ENCODE measurements at regions of chr11 and their contacts with region 1.

Region 1: GRCh38 chr11:6619004-6619745 is at the start of gene TPP1:
- DNase-seq: peak; percentile 76 to 94 (median 90)
- ATAC-seq: peak; percentile 96
- H3K4me3 ChIP-seq: peak within 1 kb of the TSS; percentile 91
- H3K4me3 Mint-ChIP-seq: no peak within 1 kb of the TSS
- H3K27ac ChIP-seq: peak within 1 kb of the TSS; percentile 87
- H3K27ac Mint-ChIP-seq: no peak within 1 kb of the TSS
- H3K4me1 ChIP-seq: peaks cover 6 to 22% of the 10 kb centered on the region in 2 donors
- H3K4me1 Mint-ChIP-seq: peaks cover 7 to 17% (median 9%) of the 10 kb centered on the region in 7 donors
- H3K27me3 ChIP-seq: no peaks in the 10 kb centered on the region
- H3K27me3 Mint-ChIP-seq: no peaks in the 10 kb centered on the region
- total RNA-seq, gene TPP1: 49.9 to 160 (median 134) TPM

Region 2: DNA sequence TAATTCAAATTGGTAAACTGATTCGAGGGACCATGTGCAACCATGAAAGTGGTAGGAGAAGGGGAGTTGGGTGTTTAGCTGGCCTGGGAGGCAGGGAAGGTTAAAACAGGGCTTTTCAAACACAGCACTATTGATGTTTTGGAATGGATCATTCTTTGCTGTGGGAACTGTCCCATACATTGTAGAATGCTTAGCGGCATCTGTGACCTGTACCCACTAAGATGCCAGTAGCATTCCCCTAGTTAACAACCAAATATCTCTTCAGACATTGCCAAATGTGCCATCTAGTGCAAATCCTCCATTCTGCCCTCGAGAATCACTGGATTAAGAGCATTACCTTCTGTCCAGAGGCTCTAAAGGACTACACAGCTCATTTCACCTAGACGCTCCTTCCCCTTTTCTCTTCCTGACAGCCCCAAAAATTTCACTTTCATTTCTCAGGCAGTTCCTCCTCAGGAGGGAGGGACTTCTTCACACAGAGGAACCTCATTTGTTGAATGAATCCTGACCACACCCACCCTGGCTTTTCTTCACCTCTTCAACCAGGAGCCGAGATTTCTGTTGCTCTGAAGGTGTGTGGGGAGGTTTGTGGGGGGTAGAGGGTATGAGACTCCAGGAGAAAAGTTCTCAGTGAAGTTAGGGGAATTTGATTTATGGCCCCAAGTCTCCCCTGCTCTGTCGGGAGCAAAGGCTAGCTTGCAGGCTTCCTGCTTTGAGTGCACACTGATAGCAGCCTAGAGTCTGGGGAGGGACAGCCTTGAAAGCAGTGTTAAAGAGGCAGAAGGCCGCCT is 994.5 kb before region 1 on chr11 and contains the start of gene TRIM34:
- CTCF ChIA-PET with region 1: no interaction called
- POLR2A ChIA-PET with region 1: no interaction called
- intact Hi-C with region 1: loop called in 1 of 2 experiments (anchors 5 kb)
- DNase-seq: peak; percentile 15 to 79 (median 74)
- ATAC-seq: peak; percentile 98
- H3K4me3 ChIP-seq: peak within 1 kb of the TSS; percentile 73
- H3K4me3 Mint-ChIP-seq: peak within 1 kb of the TSS; percentile 81 to 96 (median 91)
- H3K27ac ChIP-seq: peak within 1 kb of the TSS; percentile 84
- H3K27ac Mint-ChIP-seq: peak within 1 kb of the TSS; percentile 90 to 96 (median 95)
- H3K4me1 ChIP-seq: peaks cover 17 to 18% of the 10 kb centered on the region in 2 donors
- H3K4me1 Mint-ChIP-seq: peaks cover 33 to 55% (median 51%) of the 10 kb centered on the region in 7 donors
- H3K27me3 ChIP-seq: no peaks in the 10 kb centered on the region
- H3K27me3 Mint-ChIP-seq: no peaks in the 10 kb centered on the region
- total RNA-seq, gene TRIM34: 5.8 to 14.2 (median 10.8) TPM

Region 3: GRCh38 chr11:6531267-6531752 is 87.9 kb before region 1 on chr11:
- CTCF ChIA-PET with region 1: interaction called, 6 read pairs
- POLR2A ChIA-PET with region 1: no interaction called
- intact Hi-C with region 1: loop called in 1 of 2 experiments (anchors 1 kb)
- DNase-seq: peak in 7 of 9 donors; percentile 7 to 51 (median 39)
- ATAC-seq: peak; percentile 83
- H3K4me3 ChIP-seq: no peak overlapping the region
- H3K4me3 Mint-ChIP-seq: no peak overlapping the region
- H3K27ac ChIP-seq: no peak overlapping the region
- H3K27ac Mint-ChIP-seq: no peak overlapping the region
- H3K4me1 ChIP-seq: peaks cover 4 to 5% of the 10 kb centered on the region in 2 donors
- H3K4me1 Mint-ChIP-seq: peaks cover 5 to 14% (median 11%) of the 10 kb centered on the region in 7 donors
- H3K27me3 ChIP-seq: no peaks in the 10 kb centered on the region
- H3K27me3 Mint-ChIP-seq: no peaks in the 10 kb centered on the region

Region 4: GRCh38 chr11:6646918-6647679 is 27.9 kb after region 1 on chr11:
- CTCF ChIA-PET with region 1: interaction called, 5 read pairs
- POLR2A ChIA-PET with region 1: interaction called, 57 read pairs
- intact Hi-C with region 1: loop called (anchors 2 to 5 kb)
- DNase-seq: peak in 6 of 9 donors; percentile 32 to 39 (median 35)
- ATAC-seq: peak; percentile 73
- H3K4me3 ChIP-seq: peak overlapping the region; percentile 35
- H3K4me3 Mint-ChIP-seq: no peak overlapping the region
- H3K27ac ChIP-seq: peak overlapping the region; percentile 72
- H3K27ac Mint-ChIP-seq: no peak overlapping the region
- H3K4me1 ChIP-seq: peaks cover 21 to 49% of the 10 kb centered on the region in 2 donors
- H3K4me1 Mint-ChIP-seq: no peaks in the 10 kb centered on the region
- H3K27me3 ChIP-seq: no peaks in the 10 kb centered on the region
- H3K27me3 Mint-ChIP-seq: no peaks in the 10 kb centered on the region

Region 5: GRCh38 chr11:6667733-6668374 is 48.7 kb after region 1 on chr11:
- CTCF ChIA-PET with region 1: interaction called, 25 read pairs
- POLR2A ChIA-PET with region 1: interaction called, 35 read pairs
- intact Hi-C with region 1: loop called (anchors 1 kb)
- DNase-seq: peak in 8 of 9 donors; percentile 23 to 53 (median 46)
- ATAC-seq: peak; percentile 87
- H3K4me3 ChIP-seq: no peak overlapping the region
- H3K4me3 Mint-ChIP-seq: peak overlapping the region in 3 of 10 donors; percentile 18 to 65 (median 39)
- H3K27ac ChIP-seq: peak overlapping the region; percentile 29
- H3K27ac Mint-ChIP-seq: peak overlapping the region; percentile 38 to 91 (median 64)
- H3K4me1 ChIP-seq: peaks cover 10 to 43% of the 10 kb centered on the region in 2 donors
- H3K4me1 Mint-ChIP-seq: peaks cover 35 to 85% (median 70%) of the 10 kb centered on the region in 7 donors
- H3K27me3 ChIP-seq: no peaks in the 10 kb centered on the region
- H3K27me3 Mint-ChIP-seq: peaks cover 0 to 13% (median 0%) of the 10 kb centered on the region in 5 donors

Region 6: DNA sequence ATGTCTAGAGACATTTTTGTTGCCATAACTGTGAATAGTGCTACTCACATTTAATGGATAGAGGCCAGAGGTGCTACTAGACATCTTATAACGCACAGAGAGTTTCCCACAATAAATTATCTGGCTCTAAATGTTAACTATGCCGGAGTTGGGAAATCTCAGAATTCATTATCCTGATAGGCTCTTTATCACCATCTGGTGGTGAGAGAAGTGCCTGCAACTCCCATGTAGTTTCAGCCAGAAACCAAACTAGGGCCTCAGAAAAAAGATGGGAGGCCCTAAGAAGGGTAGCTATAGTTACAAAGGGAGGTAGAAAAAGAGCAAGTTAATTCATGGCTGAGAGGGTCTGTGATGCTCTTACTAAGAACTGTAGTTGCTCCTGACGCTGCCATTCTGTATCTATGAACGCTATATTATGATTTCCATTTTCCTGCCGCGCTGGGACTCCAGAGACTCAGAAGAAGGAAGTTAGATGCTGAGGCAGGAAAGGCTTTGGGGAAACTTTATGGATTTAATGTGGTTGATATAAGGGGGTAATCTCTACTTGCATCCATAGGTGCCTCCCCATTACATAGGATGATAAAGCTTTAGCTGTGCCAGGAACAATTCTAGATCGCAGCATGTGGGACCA is 86.8 kb after region 1 on chr11:
- CTCF ChIA-PET with region 1: interaction called, 3 read pairs
- POLR2A ChIA-PET with region 1: no interaction called
- intact Hi-C with region 1: loop called in 1 of 2 experiments (anchors 1 kb)
- DNase-seq: peak in 8 of 9 donors; percentile 20 to 49 (median 38)
- ATAC-seq: peak; percentile 79
- H3K4me3 ChIP-seq: no peak overlapping the region
- H3K4me3 Mint-ChIP-seq: no peak overlapping the region
- H3K27ac ChIP-seq: peak overlapping the region; percentile 28
- H3K27ac Mint-ChIP-seq: peak overlapping the region in 8 of 9 donors; percentile 36 to 87 (median 76)
- H3K4me1 ChIP-seq: no peaks in the 10 kb centered on the region
- H3K4me1 Mint-ChIP-seq: peaks cover 11 to 39% (median 17%) of the 10 kb centered on the region in 7 donors
- H3K27me3 ChIP-seq: no peaks in the 10 kb centered on the region
- H3K27me3 Mint-ChIP-seq: no peaks in the 10 kb centered on the region

Region 7: DNA sequence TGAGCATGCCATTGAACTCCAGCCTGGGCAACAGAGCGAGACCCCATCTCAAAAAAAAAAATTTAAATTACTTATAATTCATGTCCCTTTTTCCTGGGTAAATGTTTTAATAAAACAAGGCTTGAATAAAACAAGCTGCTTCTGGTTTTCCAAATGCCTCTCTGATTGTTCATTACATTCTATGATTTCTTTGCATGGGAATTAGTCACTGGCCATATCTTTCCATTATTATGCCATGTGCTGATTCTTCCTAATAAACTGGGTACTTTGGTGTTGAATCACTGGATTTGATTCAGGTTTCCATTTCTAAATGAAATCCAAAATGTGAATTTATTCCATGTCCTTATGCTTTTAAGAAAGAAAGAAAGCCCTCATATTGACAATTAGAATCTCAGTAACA is 349.6 kb after region 1 on chr11:
- CTCF ChIA-PET with region 1: no interaction called
- POLR2A ChIA-PET with region 1: no interaction called
- intact Hi-C with region 1: no loop called
- DNase-seq: no peak
- ATAC-seq: no peak
- H3K4me3 ChIP-seq: no peak overlapping the region
- H3K4me3 Mint-ChIP-seq: no peak overlapping the region
- H3K27ac ChIP-seq: no peak overlapping the region
- H3K27ac Mint-ChIP-seq: no peak overlapping the region
- H3K4me1 ChIP-seq: no peaks in the 10 kb centered on the region
- H3K4me1 Mint-ChIP-seq: no peaks in the 10 kb centered on the region
- H3K27me3 ChIP-seq: no peaks in the 10 kb centered on the region
- H3K27me3 Mint-ChIP-seq: peaks cover 0 to 12% (median 0%) of the 10 kb centered on the region in 5 donors